ENCODE measurements at regions of chr7 and their contacts with region 1.

Region 1: GRCh38 chr7:21261627-21262594 is 166.0 kb upstream of the SP4 start:
- DNase-seq: no peak
- ATAC-seq: no peak

Region 2: GRCh38 chr7:20858951-20859350 is 403.0 kb before region 1 on chr7:
- intact Hi-C with region 1: no loop called
- DNase-seq: no peak
- ATAC-seq: peak in 1 of 2 donors; percentile 67

Region 3: DNA sequence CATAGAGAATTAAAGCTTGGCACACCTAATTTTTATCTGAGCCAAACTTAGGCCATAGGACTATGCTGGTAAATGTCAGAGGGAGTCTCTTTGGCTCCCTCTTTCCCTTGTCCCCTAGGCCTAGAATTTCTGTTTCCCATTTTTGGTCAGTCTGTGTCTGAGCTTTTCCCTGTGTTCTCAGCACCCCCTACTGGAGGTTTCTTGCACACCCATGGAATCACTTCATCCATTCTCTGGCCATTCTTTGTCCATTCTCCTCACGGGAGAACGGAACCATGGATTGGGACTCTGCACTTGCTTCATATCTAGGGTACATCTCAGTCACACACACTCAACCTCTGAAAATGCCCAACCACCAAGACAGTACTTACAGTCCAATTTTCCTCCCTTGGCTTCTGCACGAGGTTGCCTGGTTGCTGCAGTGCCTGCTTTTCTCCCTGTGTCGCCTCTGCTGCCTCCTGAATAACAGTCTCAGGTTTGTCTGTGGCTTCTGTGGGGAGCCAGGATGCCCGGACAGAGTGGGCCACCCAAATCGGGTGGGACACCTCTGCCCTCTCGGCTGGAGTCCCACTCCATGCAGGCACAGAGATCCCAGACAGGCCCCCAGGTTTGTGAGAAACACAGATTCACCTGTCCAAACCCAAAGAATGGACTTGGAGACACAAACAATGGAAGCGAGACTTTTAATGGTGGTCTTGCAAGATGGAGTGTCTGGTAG is 245.9 kb after region 1 on chr7:
- intact Hi-C with region 1: loop called (anchors 2 to 10 kb)
- DNase-seq: no peak
- ATAC-seq: peak; percentile 57 to 61

Region 4: DNA sequence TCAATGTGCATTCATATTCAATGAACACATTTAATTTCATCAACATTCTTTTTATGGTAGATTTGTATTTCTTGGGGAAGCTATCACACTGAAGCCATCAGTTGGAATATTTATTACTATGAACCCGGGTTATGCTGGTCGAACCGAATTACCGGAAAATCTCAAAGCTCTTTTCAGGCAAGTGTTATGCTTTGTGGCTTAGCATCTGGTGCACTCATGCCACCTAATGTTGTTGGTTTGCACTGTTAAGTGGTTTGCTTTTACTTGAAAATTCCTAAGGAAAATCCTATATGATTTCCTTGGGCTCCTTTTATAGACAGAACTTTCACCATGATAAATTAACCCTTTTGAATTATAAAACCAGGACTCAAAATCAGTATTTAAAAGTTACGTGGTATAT is 428.8 kb after region 1 on chr7:
- intact Hi-C with region 1: loop called in 1 of 2 experiments (anchors 10 kb)
- DNase-seq: no peak
- ATAC-seq: no peak